Ovary (tissue), 10 donors: ENCODE measurements at regions of chr14 and their contacts with region 1.

Region 1: DNA sequence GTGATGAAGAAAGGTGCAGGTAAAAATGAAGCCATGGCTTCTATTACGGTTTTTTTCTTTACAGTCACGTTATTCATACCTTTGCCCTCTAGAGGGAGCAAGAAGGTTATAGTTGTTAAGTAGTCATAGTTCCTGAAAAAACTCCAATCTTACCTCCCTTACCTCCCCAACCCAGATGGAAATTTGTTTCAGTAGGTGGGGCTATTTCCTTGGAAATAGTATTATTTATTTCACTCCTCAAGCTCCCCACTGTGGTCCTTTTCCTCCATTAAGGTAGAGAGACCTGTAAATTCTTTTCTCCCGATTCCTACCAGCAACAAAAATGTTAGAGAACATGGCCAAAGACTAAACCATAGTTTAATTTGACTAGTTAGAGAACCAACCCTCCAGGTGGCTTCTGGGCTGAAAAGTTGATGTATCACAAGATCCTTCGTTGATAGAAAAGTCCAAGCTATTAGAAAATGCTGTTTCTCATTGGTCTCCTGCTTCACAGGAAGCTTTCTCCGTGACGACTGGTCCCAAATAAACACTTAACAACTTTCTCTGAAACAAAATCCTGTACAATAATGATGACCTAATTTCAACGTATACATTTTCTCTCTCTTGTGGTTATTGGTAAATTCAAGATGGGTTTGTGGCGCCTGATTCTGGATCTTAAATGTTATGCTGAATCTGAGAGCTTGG is 43.5 kb downstream of the TMX1 start:
- DNase-seq: no peak
- H3K4me3 ChIP-seq: no peak overlapping the region
- H3K27ac ChIP-seq: no peak overlapping the region
- H3K4me1 ChIP-seq: no peaks in the 10 kb centered on the region
- H3K27me3 ChIP-seq: no peaks in the 10 kb centered on the region
- CTCF ChIP-seq: peak; percentile 24 to 94 (median 91)
- EP300 ChIP-seq: no peak
- POLR2A ChIP-seq: no peak

Region 2: GRCh38 chr14:51335531-51335930 is 52.0 kb after region 1 on chr14:
- intact Hi-C with region 1: no loop called
- DNase-seq: peak; percentile 49 to 71 (median 66)
- H3K4me3 ChIP-seq: no peak overlapping the region
- H3K27ac ChIP-seq: peak overlapping the region in 1 of 2 donors; percentile 16
- H3K4me1 ChIP-seq: peaks cover 14% of the 10 kb centered on the region
- H3K27me3 ChIP-seq: no peaks in the 10 kb centered on the region
- CTCF ChIP-seq: no peak
- EP300 ChIP-seq: no peak
- POLR2A ChIP-seq: no peak

Region 3: GRCh38 chr14:51774209-51774608 is 490.7 kb after region 1 on chr14:
- intact Hi-C with region 1: loop called (anchors 2 to 10 kb)
- DNase-seq: no peak
- H3K4me3 ChIP-seq: no peak overlapping the region
- H3K27ac ChIP-seq: no peak overlapping the region
- H3K4me1 ChIP-seq: no peaks in the 10 kb centered on the region
- H3K27me3 ChIP-seq: no peaks in the 10 kb centered on the region
- CTCF ChIP-seq: no peak
- EP300 ChIP-seq: no peak
- POLR2A ChIP-seq: no peak

Region 4: GRCh38 chr14:51780006-51780692 is 496.6 kb after region 1 on chr14:
- intact Hi-C with region 1: loop called (anchors 2 to 10 kb)
- DNase-seq: peak; percentile 69 to 84 (median 77)
- H3K4me3 ChIP-seq: no peak overlapping the region
- H3K27ac ChIP-seq: no peak overlapping the region
- H3K4me1 ChIP-seq: no peaks in the 10 kb centered on the region
- H3K27me3 ChIP-seq: no peaks in the 10 kb centered on the region
- CTCF ChIP-seq: peak; percentile 75 to 80 (median 76)
- EP300 ChIP-seq: no peak
- POLR2A ChIP-seq: no peak

Region 5: GRCh38 chr14:51979088-51979709 is 695.7 kb after region 1 on chr14:
- intact Hi-C with region 1: loop called in 1 of 4 experiments (anchors 5 kb)
- DNase-seq: peak; percentile 69 to 85 (median 82)
- H3K4me3 ChIP-seq: no peak overlapping the region
- H3K27ac ChIP-seq: no peak overlapping the region
- H3K4me1 ChIP-seq: peaks cover 3% of the 10 kb centered on the region
- H3K27me3 ChIP-seq: no peaks in the 10 kb centered on the region
- CTCF ChIP-seq: peak; percentile 64 to 72 (median 69)
- EP300 ChIP-seq: no peak
- POLR2A ChIP-seq: no peak